Motor neuron (in vitro differentiated cells): ENCODE measurements at regions of chr14 and their contacts with region 1.

Region 1: GRCh38 chr14:61252369-61253063 is 28.6 kb downstream of the TMEM30B start:
- ATAC-seq: peak; percentile 94 to 100 (median 98)
- H3K4me3 ChIP-seq: no peak overlapping the region
- H3K27ac ChIP-seq: no peak overlapping the region
- H3K4me1 ChIP-seq: peaks cover 0 to 2% of the 10 kb centered on the region in 2 donors

Region 2: GRCh38 chr14:60622917-60623257 is 629.6 kb before region 1 on chr14:
- in situ Hi-C with region 1: loop called in 8 of 9 experiments (anchors 10 to 25 kb)
- ATAC-seq: no peak
- H3K4me3 ChIP-seq: no peak overlapping the region
- H3K27ac ChIP-seq: no peak overlapping the region
- H3K4me1 ChIP-seq: no peaks in the 10 kb centered on the region

Region 3: GRCh38 chr14:60637479-60638315 is 614.8 kb before region 1 on chr14:
- in situ Hi-C with region 1: loop called in 7 of 9 experiments (anchors 10 to 25 kb)
- ATAC-seq: peak in 6 of 8 experiments; percentile 33 to 71 (median 43)
- H3K4me3 ChIP-seq: peak overlapping the region in 3 of 5 donors; percentile 2 to 14 (median 10)
- H3K27ac ChIP-seq: no peak overlapping the region
- H3K4me1 ChIP-seq: peaks cover 6% of the 10 kb centered on the region in 2 donors

Region 4: GRCh38 chr14:60648934-60649874 is 603.3 kb before region 1 on chr14 and contains the start of gene SIX1:
- in situ Hi-C with region 1: loop called in 6 of 9 experiments (anchors 25 kb)
- ATAC-seq: peak; percentile 85 to 97 (median 94)
- H3K4me3 ChIP-seq: peak within 1 kb of the TSS; percentile 18 to 41 (median 29)
- H3K27ac ChIP-seq: no peak within 1 kb of the TSS
- H3K4me1 ChIP-seq: peaks cover 0 to 4% of the 10 kb centered on the region in 2 donors
- total RNA-seq, gene SIX1: 0.05 to 38.6 (median 2.6) TPM

Region 5: DNA sequence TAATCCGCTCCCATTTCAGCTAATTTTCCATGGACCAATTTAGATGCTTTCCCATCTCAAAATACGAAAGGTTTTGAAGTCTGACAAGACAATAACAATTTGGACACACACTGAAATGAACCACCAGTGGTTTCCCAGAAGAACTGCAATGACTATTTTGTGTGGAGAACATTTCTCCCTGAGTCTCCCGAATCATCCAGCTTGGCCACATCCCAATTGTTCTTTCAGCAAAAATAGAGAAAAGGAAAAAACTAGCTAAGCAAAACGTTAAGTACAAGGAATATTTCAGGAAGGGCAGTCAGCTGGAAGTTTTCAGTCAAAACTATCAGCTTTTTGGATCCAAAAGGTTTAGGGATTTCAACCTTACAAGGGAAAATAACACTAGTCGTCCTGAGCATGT is 1402.1 kb after region 1 on chr14:
- in situ Hi-C with region 1: no loop called
- ATAC-seq: no peak
- H3K4me3 ChIP-seq: no peak overlapping the region
- H3K27ac ChIP-seq: no peak overlapping the region
- H3K4me1 ChIP-seq: no peaks in the 10 kb centered on the region